ENCODE measurements at regions of chr9 and their contacts with region 1.

Region 1: DNA sequence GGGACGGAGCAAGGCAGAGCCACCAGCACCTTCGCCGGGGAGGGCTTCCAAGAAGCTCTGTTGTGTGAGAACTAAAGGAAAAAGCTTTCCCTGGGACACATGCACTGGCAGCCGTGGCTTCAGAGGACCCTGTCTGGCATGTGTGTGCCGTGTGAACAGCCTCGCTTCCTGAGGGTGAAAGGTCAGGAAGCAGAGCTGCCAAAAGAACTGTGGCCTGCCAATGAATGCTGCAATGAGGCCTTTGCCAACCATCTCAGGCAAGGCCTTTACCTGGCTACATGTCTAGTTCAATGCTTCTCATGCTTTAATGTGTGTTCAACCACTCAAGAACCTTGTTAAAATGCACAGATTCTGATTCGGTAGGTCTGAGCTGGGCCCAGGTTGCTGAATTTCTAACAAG is 53.5 kb downstream of the NIPSNAP3B start:
- DNase-seq: no peak
- H3K4me3 ChIP-seq: no peak overlapping the region
- H3K27ac ChIP-seq: no peak overlapping the region
- H3K4me1 ChIP-seq: no peaks in the 10 kb centered on the region
- H3K27me3 ChIP-seq: no peaks in the 10 kb centered on the region
- CTCF ChIP-seq: no peak

Region 2: GRCh38 chr9:104903609-104904008 is 86.2 kb after region 1 on chr9:
- CTCF ChIA-PET with region 1: no interaction called
- dilution Hi-C with region 1: loop called (anchors 5 kb)
- in situ Hi-C with region 1: no loop called
- intact Hi-C with region 1: no loop called
- DNase-seq: no peak
- H3K4me3 ChIP-seq: no peak overlapping the region
- H3K27ac ChIP-seq: no peak overlapping the region
- H3K4me1 ChIP-seq: peaks cover 51% of the 10 kb centered on the region
- H3K27me3 ChIP-seq: no peaks in the 10 kb centered on the region
- CTCF ChIP-seq: no peak

Measured in mammary epithelial cell (primary cell).